ENCODE measurements at regions of chr1 and their contacts with region 1.

Region 1: DNA sequence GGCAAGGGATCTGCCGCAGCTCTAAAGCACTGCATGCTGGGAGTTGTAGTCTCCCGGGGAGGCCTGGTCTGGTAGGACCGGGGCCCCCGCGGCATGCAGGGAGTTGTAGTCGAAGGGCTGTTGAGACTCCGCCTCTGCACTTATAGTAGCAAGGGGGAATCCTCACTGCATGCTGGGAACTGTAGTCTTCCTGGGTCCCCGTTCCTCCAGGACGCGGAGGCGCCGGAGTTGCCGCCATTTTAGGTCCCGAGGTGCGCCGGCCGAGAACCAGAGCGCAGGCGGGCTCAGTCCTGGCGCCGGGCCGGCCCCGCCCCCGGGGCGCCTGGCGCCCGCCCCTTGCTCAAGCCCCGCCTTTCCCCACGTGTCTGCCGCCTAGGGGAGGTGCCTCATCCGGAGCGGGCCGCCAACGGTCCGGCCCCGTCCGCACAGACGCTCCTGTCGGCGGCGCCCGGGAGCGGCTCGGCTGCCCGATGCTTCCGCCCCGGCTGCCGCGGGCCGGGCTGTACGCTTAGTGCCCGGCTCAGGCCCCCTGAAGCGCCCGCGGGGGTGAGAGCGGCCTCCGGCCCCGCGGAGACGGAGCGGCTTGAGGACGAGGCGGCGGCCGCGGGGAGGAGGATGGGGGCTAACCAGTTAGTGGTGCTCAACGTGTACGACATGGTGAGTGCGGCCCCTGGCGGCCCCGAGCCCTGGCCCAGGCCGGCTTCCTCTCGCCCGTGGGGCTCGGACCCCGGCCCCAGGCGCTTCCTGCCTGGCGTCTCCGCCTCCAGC is at the start of gene DESI2:
- DNase-seq: peak; percentile 98 to 99 (median 99)
- ATAC-seq: peak; percentile 97 to 99 (median 98)
- H3K4me3 ChIP-seq: peak within 1 kb of the TSS; percentile 51 to 99 (median 88)
- H3K27ac ChIP-seq: peak within 1 kb of the TSS; percentile 83 to 98 (median 96)
- H3K4me1 ChIP-seq: peaks cover 4 to 48% (median 31%) of the 10 kb centered on the region in 12 donors
- H3K27me3 ChIP-seq: no peaks in the 10 kb centered on the region
- CTCF ChIP-seq: peak; percentile 32 to 77 (median 58)
- POLR2A ChIP-seq: peak; percentile 87 to 98
- total RNA-seq, gene DESI2: 18.7 to 34.2 (median 23.1) TPM

Region 2: GRCh38 chr1:244461245-244462071 is 191.4 kb before region 1 on chr1 and contains the start of gene CATSPERE:
- intact Hi-C with region 1: loop called in 5 of 10 experiments (anchors 1 to 10 kb)
- DNase-seq: peak; percentile 91 to 96 (median 95)
- ATAC-seq: peak; percentile 98 to 99 (median 99)
- H3K4me3 ChIP-seq: peak within 1 kb of the TSS; percentile 17 to 80 (median 64)
- H3K27ac ChIP-seq: peak within 1 kb of the TSS; percentile 47 to 93 (median 88)
- H3K4me1 ChIP-seq: peaks cover 0 to 14% (median 5%) of the 10 kb centered on the region in 12 donors
- H3K27me3 ChIP-seq: no peaks in the 10 kb centered on the region
- CTCF ChIP-seq: no peak
- POLR2A ChIP-seq: peak in 1 of 2 donors; percentile 72
- total RNA-seq, gene CATSPERE: 0.11 to 1.2 (median 0.35) TPM

Region 3: GRCh38 chr1:244705261-244706234 is 52.7 kb after region 1 on chr1:
- intact Hi-C with region 1: no loop called
- DNase-seq: no peak
- ATAC-seq: peak; percentile 25 to 58 (median 48)
- H3K4me3 ChIP-seq: no peak overlapping the region
- H3K27ac ChIP-seq: peak overlapping the region in 1 of 12 donors; percentile 11
- H3K4me1 ChIP-seq: peaks cover 0 to 17% (median 1%) of the 10 kb centered on the region in 12 donors
- H3K27me3 ChIP-seq: no peaks in the 10 kb centered on the region
- CTCF ChIP-seq: no peak
- POLR2A ChIP-seq: no peak

Region 4: DNA sequence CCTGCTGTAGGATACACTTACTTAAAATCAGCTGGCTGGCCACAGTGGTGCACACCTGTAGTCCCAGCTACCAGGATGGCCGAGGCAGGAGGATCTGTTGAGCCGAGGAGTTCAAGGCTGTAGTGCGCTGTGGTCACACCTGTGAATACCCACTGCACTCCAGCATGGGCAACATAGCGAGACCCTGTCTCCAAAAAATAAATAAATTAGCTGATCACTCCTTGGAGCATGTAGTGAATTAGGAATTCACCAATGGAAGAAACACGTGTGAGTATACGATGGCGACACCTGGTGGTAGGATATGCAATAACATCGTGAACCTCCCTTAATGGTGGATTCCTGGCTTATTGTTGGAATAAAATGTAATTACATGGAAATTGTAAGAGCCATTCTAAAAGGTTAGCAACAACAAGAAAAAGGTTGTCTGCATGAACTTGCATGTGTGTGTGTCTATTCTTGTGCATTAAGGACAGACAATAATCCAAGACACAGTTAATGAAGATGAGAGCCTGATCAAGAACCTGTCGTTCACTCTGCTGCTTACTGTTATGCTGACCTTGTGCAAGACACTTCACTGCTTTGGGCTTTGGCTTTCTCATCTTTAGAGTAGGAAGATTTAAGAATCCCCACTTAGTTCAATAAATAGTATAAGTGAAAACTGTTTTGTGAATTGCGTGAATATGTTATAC is 144.0 kb after region 1 on chr1:
- intact Hi-C with region 1: loop called in 3 of 10 experiments (anchors 5 kb)
- DNase-seq: peak in 4 of 5 donors; percentile 35 to 60 (median 46)
- ATAC-seq: peak in 3 of 4 donors; percentile 58 to 68 (median 63)
- H3K4me3 ChIP-seq: no peak overlapping the region
- H3K27ac ChIP-seq: no peak overlapping the region
- H3K4me1 ChIP-seq: peaks cover 0 to 4% (median 0%) of the 10 kb centered on the region in 12 donors
- H3K27me3 ChIP-seq: no peaks in the 10 kb centered on the region
- CTCF ChIP-seq: peak; percentile 79 to 91 (median 88)
- POLR2A ChIP-seq: no peak

Region 5: DNA sequence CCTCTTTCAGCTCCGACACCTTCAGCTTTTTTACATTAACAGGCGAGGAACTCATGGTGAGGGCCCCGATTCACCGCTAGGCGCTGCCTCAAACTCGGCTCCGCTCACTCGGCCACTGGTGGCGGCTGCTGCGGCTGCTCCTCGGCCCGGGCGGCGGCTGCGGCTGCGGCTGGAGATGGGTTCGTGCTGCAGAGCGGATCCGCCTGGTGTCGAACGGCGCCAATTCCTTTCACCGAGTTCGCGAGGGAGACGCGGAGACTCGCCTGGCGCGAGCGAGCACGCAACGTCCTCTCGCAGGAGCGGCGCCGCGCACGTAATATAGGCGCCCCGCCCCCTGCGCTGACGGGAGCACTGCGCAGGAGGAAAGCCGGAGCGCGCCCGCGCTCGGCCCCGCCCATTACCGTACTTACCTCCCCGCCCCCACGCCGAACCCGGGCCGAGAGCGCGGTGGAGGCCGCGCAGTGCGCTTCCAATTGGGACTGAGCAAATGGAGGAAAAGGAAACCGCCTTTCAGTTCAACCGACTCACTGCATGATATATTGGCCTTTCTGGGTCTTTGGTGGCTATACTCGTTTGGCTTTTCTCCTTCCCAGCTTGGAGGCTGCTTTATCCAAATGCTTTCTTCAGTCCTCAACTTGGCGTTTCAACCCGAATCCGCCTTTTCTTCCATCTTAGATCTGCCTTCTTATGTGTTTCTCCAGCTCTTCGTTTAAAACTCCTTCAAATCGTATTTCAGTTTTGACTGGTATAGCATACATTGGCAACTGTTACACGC is 211.6 kb after region 1 on chr1 and contains the start of gene HNRNPU:
- intact Hi-C with region 1: loop called in 1 of 10 experiments (anchors 10 kb)
- DNase-seq: peak; percentile 97 to 99 (median 98)
- ATAC-seq: peak; percentile 89 to 96 (median 93)
- H3K4me3 ChIP-seq: peak within 1 kb of the TSS; percentile 88 to 100 (median 96)
- H3K27ac ChIP-seq: peak within 1 kb of the TSS; percentile 94 to 100 (median 100)
- H3K4me1 ChIP-seq: peaks cover 5 to 47% (median 40%) of the 10 kb centered on the region in 12 donors
- H3K27me3 ChIP-seq: no peaks in the 10 kb centered on the region
- CTCF ChIP-seq: peak in 7 of 12 donors; percentile 5 to 38 (median 32)
- POLR2A ChIP-seq: peak; percentile 75 to 97
- total RNA-seq, gene HNRNPU: 138 to 218 (median 169) TPM

Measured in heart left ventricle (tissue), 16 donors.